ENCODE measurements at regions of chr5 and their contacts with region 1.

Region 1: DNA sequence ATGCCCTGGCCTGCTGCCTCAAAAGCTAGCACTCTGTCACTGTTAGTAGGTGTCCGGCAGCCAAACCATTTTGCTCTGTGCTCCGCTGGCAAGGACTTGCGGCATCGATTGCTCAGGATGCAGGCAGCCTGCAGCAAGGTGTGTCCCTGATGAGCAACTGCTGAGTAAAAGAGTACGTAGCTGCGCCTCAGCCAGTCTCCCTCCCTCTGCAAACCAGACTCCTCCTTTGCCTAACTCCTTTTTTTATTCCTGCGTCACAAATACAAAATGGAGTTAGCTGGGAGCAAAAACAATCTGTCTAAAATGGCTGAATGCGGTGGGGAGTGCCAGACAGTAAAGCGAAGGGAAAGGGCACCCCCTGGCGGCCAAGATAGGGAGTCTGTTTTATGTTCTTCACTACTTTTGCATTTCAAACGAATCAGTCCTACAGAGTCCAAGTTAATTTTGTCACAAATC is 61.1 kb downstream of the DIAPH1 start:
- DNase-seq: peak; percentile 58
- CTCF ChIP-seq: peak; percentile 64

Region 2: DNA sequence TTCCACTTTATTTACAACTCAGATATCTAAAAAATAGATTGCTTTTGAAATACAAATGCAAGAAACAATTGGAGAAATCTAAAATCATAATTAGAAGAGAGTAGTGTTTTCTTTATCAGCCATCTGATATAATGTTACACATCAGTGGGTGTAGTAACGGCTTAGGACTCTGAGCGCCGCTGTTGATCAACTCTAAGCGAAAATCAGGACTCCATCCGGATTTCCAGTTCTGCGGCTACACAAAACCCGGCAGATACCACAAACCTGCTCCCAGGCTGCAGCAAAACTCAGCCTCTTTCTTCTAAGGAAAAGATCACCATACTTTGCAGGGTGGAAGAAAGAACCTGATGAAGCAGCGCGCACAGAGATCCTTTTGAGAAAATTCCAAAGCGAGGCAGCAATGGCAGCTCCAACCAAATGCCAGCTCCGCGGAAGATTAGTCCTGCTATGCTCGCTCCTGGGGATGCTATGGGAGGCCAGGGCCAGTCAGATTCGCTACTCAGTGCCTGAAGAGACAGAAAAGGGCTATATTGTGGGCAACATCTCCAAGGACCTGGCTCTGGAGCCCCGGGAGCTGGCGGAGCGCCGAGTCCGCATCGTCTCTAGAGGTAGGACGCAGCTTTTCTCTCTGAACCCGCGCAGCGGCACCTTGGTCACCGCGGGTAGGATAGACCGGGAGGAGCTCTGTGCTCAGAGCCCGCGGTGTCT is 155.0 kb before region 1 on chr5 and contains the start of gene PCDHGA9:
- CTCF ChIA-PET with region 1: interaction called, 42 read pairs
- POLR2A ChIA-PET with region 1: no interaction called
- DNase-seq: no peak
- CTCF ChIP-seq: peak; percentile 15

Region 3: GRCh38 chr5:141420855-141421496 is 136.7 kb before region 1 on chr5 and contains the start of gene PCDHGA11:
- CTCF ChIA-PET with region 1: interaction called, 180 read pairs
- POLR2A ChIA-PET with region 1: no interaction called
- DNase-seq: peak; percentile 69
- CTCF ChIP-seq: peak; percentile 71

Region 4: DNA sequence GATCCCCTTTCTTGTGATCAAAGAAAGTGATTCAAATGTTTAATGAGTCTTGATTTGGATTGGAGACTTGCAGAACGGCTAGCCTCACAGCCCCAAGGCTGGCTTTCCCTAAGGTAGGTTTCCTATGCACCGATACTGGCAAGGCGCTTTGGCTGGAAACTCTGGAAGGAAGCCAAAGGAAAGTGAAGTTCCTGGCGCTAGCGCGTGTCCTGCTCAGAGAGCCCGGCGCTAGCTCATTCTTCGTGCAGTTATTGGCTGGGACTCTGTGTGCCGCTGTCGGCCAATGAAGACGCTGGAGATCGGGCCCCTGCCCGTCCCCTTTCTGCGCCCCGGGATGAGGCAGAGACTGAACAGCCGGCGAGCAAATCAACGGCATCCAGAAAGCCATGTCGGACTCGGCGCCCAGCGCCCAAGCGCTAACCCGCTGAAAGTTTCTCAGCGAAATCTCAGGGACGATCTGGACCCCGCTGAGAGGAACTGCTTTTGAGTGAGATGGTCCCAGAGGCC is 82.0 kb before region 1 on chr5 and contains the start of gene PCDHGC3:
- CTCF ChIA-PET with region 1: interaction called, 35 read pairs
- POLR2A ChIA-PET with region 1: no interaction called
- DNase-seq: peak; percentile 89
- CTCF ChIP-seq: peak; percentile 75

Region 5: GRCh38 chr5:141524604-141525597 is 32.8 kb before region 1 on chr5:
- CTCF ChIA-PET with region 1: interaction called, 26 read pairs
- POLR2A ChIA-PET with region 1: no interaction called
- DNase-seq: peak; percentile 78
- CTCF ChIP-seq: peak; percentile 99

Region 6: GRCh38 chr5:141547488-141547887 is 10.2 kb before region 1 on chr5:
- CTCF ChIA-PET with region 1: interaction called, 37 read pairs
- POLR2A ChIA-PET with region 1: no interaction called
- DNase-seq: no peak
- CTCF ChIP-seq: no peak